ENCODE measurements at regions of chr1 and their contacts with region 1.

Region 1: GRCh38 chr1:84077476-84078107 is 66.5 kb upstream of the PRKACB start:
- DNase-seq: peak; percentile 85
- ATAC-seq: peak; percentile 94
- H3K4me3 Mint-ChIP-seq: peak overlapping the region; percentile 79
- H3K27ac Mint-ChIP-seq: peak overlapping the region; percentile 58
- H3K4me1 Mint-ChIP-seq: peaks cover 6% of the 10 kb centered on the region
- H3K27me3 Mint-ChIP-seq: peaks cover 2% of the 10 kb centered on the region

Region 2: GRCh38 chr1:83998498-83999315 is 78.9 kb before region 1 on chr1 and contains the start of gene TTLL7:
- CTCF ChIA-PET with region 1: no interaction called
- POLR2A ChIA-PET with region 1: no interaction called
- intact Hi-C with region 1: loop called in 1 of 2 experiments (anchors 1 kb)
- DNase-seq: peak; percentile 79
- ATAC-seq: peak; percentile 79
- H3K4me3 Mint-ChIP-seq: peak within 1 kb of the TSS; percentile 77
- H3K27ac Mint-ChIP-seq: peak within 1 kb of the TSS; percentile 49
- H3K4me1 Mint-ChIP-seq: peaks cover 12% of the 10 kb centered on the region
- H3K27me3 Mint-ChIP-seq: peaks cover 62% of the 10 kb centered on the region
- total RNA-seq, gene TTLL7: 1.4 to 2.6 TPM

Region 3: GRCh38 chr1:84037758-84038611 is 39.6 kb before region 1 on chr1:
- CTCF ChIA-PET with region 1: no interaction called
- POLR2A ChIA-PET with region 1: no interaction called
- intact Hi-C with region 1: loop called in 1 of 2 experiments (anchors 5 kb)
- DNase-seq: no peak
- ATAC-seq: no peak
- H3K4me3 Mint-ChIP-seq: no peak overlapping the region
- H3K27ac Mint-ChIP-seq: no peak overlapping the region
- H3K4me1 Mint-ChIP-seq: no peaks in the 10 kb centered on the region
- H3K27me3 Mint-ChIP-seq: peaks cover 10% of the 10 kb centered on the region

Region 4: GRCh38 chr1:84166797-84167196 is 89.2 kb after region 1 on chr1:
- CTCF ChIA-PET with region 1: no interaction called
- POLR2A ChIA-PET with region 1: no interaction called
- intact Hi-C with region 1: loop called in 1 of 2 experiments (anchors 5 kb)
- DNase-seq: no peak
- ATAC-seq: peak; percentile 71
- H3K4me3 Mint-ChIP-seq: peak overlapping the region; percentile 4
- H3K27ac Mint-ChIP-seq: peak overlapping the region; percentile 52
- H3K4me1 Mint-ChIP-seq: peaks cover 83% of the 10 kb centered on the region
- H3K27me3 Mint-ChIP-seq: no peaks in the 10 kb centered on the region

Region 5: GRCh38 chr1:84214115-84214956 is 136.7 kb after region 1 on chr1:
- CTCF ChIA-PET with region 1: no interaction called
- POLR2A ChIA-PET with region 1: no interaction called
- intact Hi-C with region 1: no loop called
- DNase-seq: no peak
- ATAC-seq: no peak
- H3K4me3 Mint-ChIP-seq: no peak overlapping the region
- H3K27ac Mint-ChIP-seq: no peak overlapping the region
- H3K4me1 Mint-ChIP-seq: peaks cover 15% of the 10 kb centered on the region
- H3K27me3 Mint-ChIP-seq: no peaks in the 10 kb centered on the region

Region 6: DNA sequence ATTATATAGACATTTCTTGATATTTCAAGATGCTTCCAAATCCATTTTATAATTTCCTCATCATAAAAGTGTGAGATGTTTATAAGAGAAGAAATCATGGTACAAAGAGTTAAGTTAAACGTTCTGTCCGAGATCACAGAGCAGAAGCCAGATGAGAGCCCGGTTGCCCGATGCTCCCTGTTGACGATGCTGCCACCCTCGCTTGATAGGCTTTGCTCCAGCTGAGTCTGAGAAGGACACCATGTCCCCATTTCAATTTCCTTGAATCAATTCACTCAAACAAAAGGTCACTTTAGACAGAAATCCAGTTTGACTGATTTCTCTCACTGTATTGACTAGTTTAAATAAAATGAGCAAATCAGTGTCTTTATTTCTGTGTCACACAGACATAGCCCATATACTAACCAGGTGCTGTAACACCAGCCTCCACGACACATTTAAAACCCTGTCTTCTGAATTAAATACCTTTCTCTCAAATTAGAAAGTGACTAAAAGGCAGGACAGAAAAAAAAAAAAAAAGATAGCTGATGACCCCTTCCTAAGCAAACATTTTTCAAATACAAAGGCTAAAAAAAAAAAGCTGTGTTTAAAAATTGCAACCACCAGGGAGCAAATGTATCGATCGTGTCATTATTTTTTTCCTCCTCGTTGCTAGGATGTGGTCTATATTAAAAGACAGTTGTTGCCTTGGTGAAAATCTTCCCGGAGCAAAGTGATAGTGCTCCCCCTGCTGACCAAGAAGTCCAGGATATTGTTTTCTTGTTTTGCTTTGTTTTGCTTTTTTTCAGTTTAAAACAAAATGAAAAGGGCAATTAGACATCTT is 355.9 kb after region 1 on chr1:
- CTCF ChIA-PET with region 1: interaction called, 3 read pairs
- POLR2A ChIA-PET with region 1: no interaction called
- intact Hi-C with region 1: loop called in 1 of 2 experiments (anchors 5 kb)
- DNase-seq: peak; percentile 65
- ATAC-seq: peak; percentile 76
- H3K4me3 Mint-ChIP-seq: peak overlapping the region; percentile 48
- H3K27ac Mint-ChIP-seq: peak overlapping the region; percentile 32
- H3K4me1 Mint-ChIP-seq: peaks cover 18% of the 10 kb centered on the region
- H3K27me3 Mint-ChIP-seq: no peaks in the 10 kb centered on the region

Region 7: DNA sequence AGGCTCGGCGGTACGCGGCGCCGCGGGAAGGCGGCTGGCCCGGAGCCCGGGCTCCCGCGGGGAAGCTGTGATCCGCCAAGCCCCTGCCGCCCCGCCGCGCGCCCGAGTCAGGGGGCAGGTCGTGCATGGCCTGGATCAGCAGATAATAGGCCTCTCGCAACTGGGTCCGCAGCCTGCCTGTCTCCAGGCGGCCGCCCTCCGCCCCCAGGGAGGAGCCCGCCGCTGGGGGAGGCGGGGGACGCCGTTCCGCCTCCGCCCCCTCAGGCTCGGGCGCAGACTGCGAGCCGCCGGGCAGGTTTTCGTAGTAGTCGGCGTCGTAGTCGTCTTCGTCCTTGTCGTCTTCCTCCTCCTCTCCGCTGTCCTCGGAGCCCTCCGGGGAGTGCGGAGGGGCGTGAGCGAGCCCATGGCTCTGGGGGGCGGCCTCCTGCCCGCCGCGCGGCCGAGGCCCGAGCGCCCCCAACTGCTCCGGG is 1123.3 kb after region 1 on chr1 and contains the start of gene SYDE2:
- CTCF ChIA-PET with region 1: no interaction called
- POLR2A ChIA-PET with region 1: no interaction called
- intact Hi-C with region 1: loop called in 1 of 2 experiments (anchors 10 kb)
- DNase-seq: peak; percentile 79
- ATAC-seq: peak; percentile 76
- H3K4me3 Mint-ChIP-seq: peak within 1 kb of the TSS; percentile 90
- H3K27ac Mint-ChIP-seq: peak within 1 kb of the TSS; percentile 88
- H3K4me1 Mint-ChIP-seq: peaks cover 25% of the 10 kb centered on the region
- H3K27me3 Mint-ChIP-seq: peaks cover 12% of the 10 kb centered on the region
- total RNA-seq, gene SYDE2: 2.9 to 3.3 TPM

Measured in activated CD4-positive, alpha-beta T cell treated with anti-CD3 and anti-CD28 coated beads for 36 hours (primary cell).